ENCODE measurements at regions of chr1 and their contacts with region 1.

Region 1: GRCh38 chr1:215526553-215527151 is 40.5 kb upstream of the KCTD3 start:
- DNase-seq: peak; percentile 28 to 68 (median 44)
- ATAC-seq: peak; percentile 84
- H3K4me3 ChIP-seq: no peak overlapping the region
- H3K27ac ChIP-seq: no peak overlapping the region
- H3K4me1 ChIP-seq: no peaks in the 10 kb centered on the region
- H3K27me3 ChIP-seq: no peaks in the 10 kb centered on the region
- CTCF ChIP-seq: peak; percentile 45 to 86 (median 58); a peak in 5 of 6 replicates
- EP300 ChIP-seq: no peak
- POLR2A ChIP-seq: no peak
- RAD21 ChIP-seq: peak; percentile 91 to 92

Region 2: DNA sequence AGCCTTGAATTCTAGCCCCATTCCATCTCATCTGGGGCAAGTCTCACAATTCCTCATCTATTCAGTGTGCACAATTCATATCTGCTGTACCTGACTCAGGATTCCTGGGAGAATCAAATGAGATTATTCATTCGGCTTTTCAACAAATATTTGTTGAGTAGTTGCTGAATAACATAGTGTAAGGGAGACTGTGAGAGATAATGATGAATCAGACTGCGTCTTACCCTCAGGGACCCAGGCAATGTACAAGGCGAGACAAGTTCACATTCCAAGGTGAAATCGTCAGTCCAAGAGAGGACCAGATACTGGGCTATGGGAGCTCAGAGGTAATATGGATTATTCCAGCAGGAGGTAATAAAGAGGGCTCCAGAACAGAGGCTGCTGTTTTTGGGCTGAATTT is 1313.5 kb before region 1 on chr1:
- CTCF ChIA-PET with region 1: interaction called, 7 read pairs
- POLR2A ChIA-PET with region 1: no interaction called
- in situ Hi-C with region 1: loop called (anchors 10 kb)
- intact Hi-C with region 1: loop called (anchors 1 kb)
- DNase-seq: no peak
- ATAC-seq: no peak
- H3K4me3 ChIP-seq: no peak overlapping the region
- H3K27ac ChIP-seq: no peak overlapping the region
- H3K4me1 ChIP-seq: 0 out of 5 replicates have a peak, but pooled peaks cover 0 to 3% of the 10 kb centered on the region in 2 experiments
- H3K27me3 ChIP-seq: peaks cover 0 to 11% of the 10 kb centered on the region in 2 experiments; a peak in 2 of 5 replicates
- CTCF ChIP-seq: no peak
- EP300 ChIP-seq: no peak
- POLR2A ChIP-seq: no peak
- RAD21 ChIP-seq: no peak

Region 3: DNA sequence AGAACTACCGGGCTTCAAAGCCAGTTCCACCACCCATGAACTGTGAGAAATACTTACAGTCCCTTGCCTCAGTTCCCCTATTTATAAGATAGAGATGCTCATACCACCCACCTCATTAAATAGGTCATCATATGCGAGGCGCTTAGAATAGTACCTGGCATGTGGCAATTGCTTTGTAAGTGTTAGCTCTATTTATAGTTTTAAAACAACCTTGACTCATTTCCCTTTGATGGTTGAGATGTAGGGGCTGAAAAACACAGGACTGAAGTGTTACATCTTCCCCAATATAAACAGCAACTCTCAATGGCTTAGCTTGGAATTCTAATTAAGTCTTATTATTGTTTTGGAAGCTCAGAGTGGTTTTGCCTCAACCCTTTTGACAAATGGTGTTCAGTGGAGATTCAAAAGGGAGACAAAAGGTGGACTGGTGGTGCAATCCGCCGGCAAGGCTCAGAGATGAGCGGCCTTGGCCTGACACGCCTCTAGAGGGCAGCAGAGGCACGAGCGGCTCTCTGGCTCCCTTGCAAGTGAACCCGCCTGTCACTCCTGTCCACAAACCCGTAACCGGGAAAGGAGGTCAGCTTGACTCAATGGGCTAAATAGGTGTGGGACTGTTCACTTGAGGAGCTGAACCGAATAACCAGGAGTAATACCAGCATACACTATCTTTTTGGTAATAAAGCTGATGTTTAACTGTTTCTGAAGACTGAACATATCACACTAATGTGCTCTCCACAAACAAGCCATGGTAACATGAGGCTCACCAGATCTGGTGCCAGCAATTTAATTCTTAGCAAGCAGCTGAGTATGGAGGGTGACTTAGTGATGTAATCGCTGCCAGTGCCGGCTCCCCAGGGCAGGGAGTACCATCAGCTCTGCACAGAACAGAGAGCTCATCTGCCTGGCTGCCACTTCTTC is 1265.2 kb before region 1 on chr1:
- CTCF ChIA-PET with region 1: no interaction called
- POLR2A ChIA-PET with region 1: no interaction called
- in situ Hi-C with region 1: no loop called
- intact Hi-C with region 1: loop called (anchors 10 kb)
- DNase-seq: peak; percentile 77 to 88 (median 80)
- ATAC-seq: peak; percentile 99
- H3K4me3 ChIP-seq: no peak overlapping the region
- H3K27ac ChIP-seq: no peak overlapping the region
- H3K4me1 ChIP-seq: peaks cover 0 to 4% of the 10 kb centered on the region in 2 experiments; a peak in 1 of 5 replicates
- H3K27me3 ChIP-seq: peaks cover 7 to 10% of the 10 kb centered on the region in 2 experiments; a peak in 4 of 5 replicates
- CTCF ChIP-seq: peak; percentile 91 to 97 (median 96)
- EP300 ChIP-seq: no peak
- POLR2A ChIP-seq: no peak
- RAD21 ChIP-seq: peak; percentile 84 to 94

Region 4: DNA sequence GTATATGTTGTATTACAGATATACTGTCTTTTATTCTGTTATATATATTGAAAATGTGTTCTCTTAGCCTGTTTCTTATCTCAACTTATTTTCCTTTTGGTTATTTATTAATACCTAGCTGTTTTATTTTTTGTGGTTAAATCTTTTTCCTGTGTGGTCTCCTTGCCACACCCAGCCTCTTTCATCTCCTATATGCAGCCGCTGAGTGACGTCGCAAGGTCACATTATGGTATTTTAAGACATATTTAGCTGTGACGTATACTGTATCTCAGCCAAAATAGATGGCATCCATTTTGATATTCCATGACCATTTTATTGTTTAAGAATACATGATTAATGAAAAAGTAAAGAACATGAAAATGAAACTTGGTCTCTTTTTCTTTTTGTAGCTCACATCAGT is 894.6 kb before region 1 on chr1:
- CTCF ChIA-PET with region 1: interaction called, 15 read pairs
- POLR2A ChIA-PET with region 1: no interaction called
- in situ Hi-C with region 1: no loop called
- intact Hi-C with region 1: loop called (anchors 2 kb)
- DNase-seq: no peak
- ATAC-seq: no peak
- H3K4me3 ChIP-seq: no peak overlapping the region
- H3K27ac ChIP-seq: no peak overlapping the region
- H3K4me1 ChIP-seq: no peaks in the 10 kb centered on the region
- H3K27me3 ChIP-seq: no peaks in the 10 kb centered on the region
- CTCF ChIP-seq: no peak
- EP300 ChIP-seq: no peak
- POLR2A ChIP-seq: no peak
- RAD21 ChIP-seq: no peak

Region 5: DNA sequence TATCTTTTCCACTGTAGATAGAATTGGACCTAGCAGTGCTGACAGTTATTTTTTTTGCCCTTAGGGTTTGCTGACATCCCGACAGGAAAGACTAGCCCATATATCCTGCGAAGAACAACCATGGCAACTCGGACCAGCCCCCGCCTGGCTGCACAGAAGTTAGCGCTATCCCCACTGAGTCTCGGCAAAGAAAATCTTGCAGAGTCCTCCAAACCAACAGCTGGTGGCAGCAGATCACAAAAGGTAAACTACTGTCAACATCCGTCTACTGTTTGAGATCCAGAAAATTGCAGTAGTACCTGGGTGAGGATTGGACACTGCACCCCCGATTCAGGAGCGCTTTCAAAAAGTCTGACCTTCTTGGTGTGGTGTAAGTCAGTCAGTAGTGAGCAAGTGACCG is 867.9 kb before region 1 on chr1:
- CTCF ChIA-PET with region 1: interaction called, 6 read pairs
- POLR2A ChIA-PET with region 1: no interaction called
- in situ Hi-C with region 1: no loop called
- intact Hi-C with region 1: loop called (anchors 2 kb)
- DNase-seq: peak in 3 of 4 experiments; percentile 12 to 42 (median 33)
- ATAC-seq: peak; percentile 33; the same call in 1 of the 3 replicates
- H3K4me3 ChIP-seq: no peak overlapping the region
- H3K27ac ChIP-seq: no peak overlapping the region
- H3K4me1 ChIP-seq: no peaks in the 10 kb centered on the region
- H3K27me3 ChIP-seq: no peaks in the 10 kb centered on the region
- CTCF ChIP-seq: peak in 2 of 3 experiments; percentile 18 to 27; a peak in 1 of 6 replicates
- EP300 ChIP-seq: no peak
- POLR2A ChIP-seq: no peak
- RAD21 ChIP-seq: peak in 1 of 2 experiments; percentile 34; a peak in 2 of 4 replicates

Region 6: GRCh38 chr1:214808845-214809460 is 717.7 kb before region 1 on chr1:
- CTCF ChIA-PET with region 1: no interaction called
- POLR2A ChIA-PET with region 1: no interaction called
- in situ Hi-C with region 1: no loop called
- intact Hi-C with region 1: loop called (anchors 5 kb)
- DNase-seq: peak in 1 of 4 experiments; percentile 12
- ATAC-seq: peak; percentile 67; the same call in 1 of the 3 replicates
- H3K4me3 ChIP-seq: no peak overlapping the region
- H3K27ac ChIP-seq: no peak overlapping the region
- H3K4me1 ChIP-seq: no peaks in the 10 kb centered on the region
- H3K27me3 ChIP-seq: no peaks in the 10 kb centered on the region
- CTCF ChIP-seq: peak in 1 of 3 experiments; percentile 39; a peak in 2 of 6 replicates
- EP300 ChIP-seq: no peak
- POLR2A ChIP-seq: no peak
- RAD21 ChIP-seq: peak; percentile 26 to 39; a peak in 3 of 4 replicates

Region 7: DNA sequence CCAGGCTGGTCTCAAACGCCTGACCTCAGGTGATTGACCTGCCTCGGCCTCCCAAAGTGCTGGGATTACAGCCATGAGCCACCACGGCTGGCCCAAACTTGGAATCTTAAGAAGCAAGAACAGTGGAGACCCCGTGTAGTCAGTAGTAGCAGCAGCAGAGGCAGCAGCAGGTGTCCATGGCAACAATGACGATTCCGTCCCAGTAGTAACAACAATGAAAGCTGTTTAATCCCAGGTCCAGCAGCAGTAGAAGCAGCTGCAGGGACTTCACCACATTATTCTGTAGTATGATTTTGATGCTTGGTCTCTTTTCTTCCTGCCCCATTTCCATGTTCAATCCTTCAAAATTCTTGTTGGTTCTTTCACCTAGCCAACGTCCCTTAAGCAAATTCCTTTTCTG is 29.1 kb before region 1 on chr1:
- CTCF ChIA-PET with region 1: no interaction called
- POLR2A ChIA-PET with region 1: no interaction called
- in situ Hi-C with region 1: no loop called
- intact Hi-C with region 1: no loop called
- DNase-seq: no peak
- ATAC-seq: no peak
- H3K4me3 ChIP-seq: no peak overlapping the region
- H3K27ac ChIP-seq: no peak overlapping the region
- H3K4me1 ChIP-seq: no peaks in the 10 kb centered on the region
- H3K27me3 ChIP-seq: no peaks in the 10 kb centered on the region
- CTCF ChIP-seq: no peak
- EP300 ChIP-seq: no peak
- POLR2A ChIP-seq: no peak
- RAD21 ChIP-seq: no peak

Region 8: GRCh38 chr1:215606564-215607168 is 80.0 kb after region 1 on chr1:
- CTCF ChIA-PET with region 1: no interaction called
- POLR2A ChIA-PET with region 1: no interaction called
- in situ Hi-C with region 1: no loop called
- intact Hi-C with region 1: loop called (anchors 1 kb)
- DNase-seq: peak in 2 of 4 experiments; percentile 20 to 23
- ATAC-seq: peak; percentile 78
- H3K4me3 ChIP-seq: no peak overlapping the region
- H3K27ac ChIP-seq: no peak overlapping the region
- H3K4me1 ChIP-seq: no peaks in the 10 kb centered on the region
- H3K27me3 ChIP-seq: no peaks in the 10 kb centered on the region
- CTCF ChIP-seq: peak in 1 of 3 experiments; percentile 57; a peak in 2 of 6 replicates
- EP300 ChIP-seq: no peak
- POLR2A ChIP-seq: no peak
- RAD21 ChIP-seq: peak; percentile 31 to 65; a peak in 3 of 4 replicates

Measured in K562 (cell line).